ENCODE measurements at regions of chr14 and their contacts with region 1.

Region 1: GRCh38 chr14:105480952-105481801 is 5.5 kb upstream of the CRIP1 start:
- DNase-seq: peak; percentile 86 to 98 (median 94)
- ATAC-seq: peak; percentile 74
- H3K4me3 ChIP-seq: peak overlapping the region; percentile 82
- H3K4me3 Mint-ChIP-seq: peak overlapping the region; percentile 73 to 92 (median 86)
- H3K27ac ChIP-seq: peak overlapping the region; percentile 100
- H3K27ac Mint-ChIP-seq: peak overlapping the region; percentile 91 to 100 (median 99)
- H3K4me1 ChIP-seq: peaks cover 56 to 78% of the 10 kb centered on the region in 2 donors
- H3K4me1 Mint-ChIP-seq: peaks cover 29 to 72% (median 43%) of the 10 kb centered on the region in 7 donors
- H3K27me3 ChIP-seq: no peaks in the 10 kb centered on the region
- H3K27me3 Mint-ChIP-seq: peaks cover 0 to 35% (median 0%) of the 10 kb centered on the region in 5 donors

Region 2: GRCh38 chr14:105086833-105087307 is 394.3 kb before region 1 on chr14:
- CTCF ChIA-PET with region 1: no interaction called
- POLR2A ChIA-PET with region 1: no interaction called
- intact Hi-C with region 1: no loop called
- DNase-seq: peak; percentile 74 to 88 (median 84)
- ATAC-seq: peak; percentile 92
- H3K4me3 ChIP-seq: peak overlapping the region; percentile 63
- H3K4me3 Mint-ChIP-seq: peak overlapping the region; percentile 64 to 83 (median 78)
- H3K27ac ChIP-seq: peak overlapping the region; percentile 55
- H3K27ac Mint-ChIP-seq: peak overlapping the region in 8 of 9 donors; percentile 3 to 84 (median 55)
- H3K4me1 ChIP-seq: peaks cover 4 to 7% of the 10 kb centered on the region in 2 donors
- H3K4me1 Mint-ChIP-seq: peaks cover 8 to 22% (median 13%) of the 10 kb centered on the region in 7 donors
- H3K27me3 ChIP-seq: no peaks in the 10 kb centered on the region
- H3K27me3 Mint-ChIP-seq: peaks cover 0 to 27% (median 0%) of the 10 kb centered on the region in 5 donors

Region 3: GRCh38 chr14:105368965-105369652 is 112.1 kb before region 1 on chr14:
- CTCF ChIA-PET with region 1: interaction called, 20 read pairs
- POLR2A ChIA-PET with region 1: interaction called, 3 read pairs
- intact Hi-C with region 1: loop called (anchors 2 kb)
- DNase-seq: no peak
- ATAC-seq: no peak
- H3K4me3 ChIP-seq: no peak overlapping the region
- H3K4me3 Mint-ChIP-seq: no peak overlapping the region
- H3K27ac ChIP-seq: no peak overlapping the region
- H3K27ac Mint-ChIP-seq: no peak overlapping the region
- H3K4me1 ChIP-seq: peaks cover 7 to 9% of the 10 kb centered on the region in 2 donors
- H3K4me1 Mint-ChIP-seq: peaks cover 2 to 9% (median 5%) of the 10 kb centered on the region in 7 donors
- H3K27me3 ChIP-seq: no peaks in the 10 kb centered on the region
- H3K27me3 Mint-ChIP-seq: no peaks in the 10 kb centered on the region

Region 4: GRCh38 chr14:105384738-105385637 is 96.2 kb before region 1 on chr14:
- CTCF ChIA-PET with region 1: no interaction called
- POLR2A ChIA-PET with region 1: no interaction called
- intact Hi-C with region 1: no loop called
- DNase-seq: no peak
- ATAC-seq: no peak
- H3K4me3 ChIP-seq: no peak overlapping the region
- H3K4me3 Mint-ChIP-seq: no peak overlapping the region
- H3K27ac ChIP-seq: no peak overlapping the region
- H3K27ac Mint-ChIP-seq: no peak overlapping the region
- H3K4me1 ChIP-seq: no peaks in the 10 kb centered on the region
- H3K4me1 Mint-ChIP-seq: peaks cover 0 to 2% (median under 1%) of the 10 kb centered on the region in 7 donors
- H3K27me3 ChIP-seq: no peaks in the 10 kb centered on the region
- H3K27me3 Mint-ChIP-seq: no peaks in the 10 kb centered on the region